Right cardiac atrium (tissue), 5 donors: ENCODE measurements at regions of chr14 and their contacts with region 1.

Region 1: GRCh38 chr14:99982537-99983250 is 82.5 kb upstream of the EVL start:
- DNase-seq: peak in 2 of 3 donors; percentile 45 to 53
- ATAC-seq: peak; percentile 88 to 89
- H3K4me3 ChIP-seq: no peak overlapping the region
- H3K27ac ChIP-seq: no peak overlapping the region
- H3K4me1 ChIP-seq: no peaks in the 10 kb centered on the region
- H3K27me3 ChIP-seq: no peaks in the 10 kb centered on the region

Region 2: GRCh38 chr14:100025111-100025510 is 42.4 kb after region 1 on chr14:
- intact Hi-C with region 1: no loop called
- DNase-seq: no peak
- ATAC-seq: peak in 1 of 2 donors; percentile 33
- H3K4me3 ChIP-seq: no peak overlapping the region
- H3K27ac ChIP-seq: no peak overlapping the region
- H3K4me1 ChIP-seq: peaks cover 4% of the 10 kb centered on the region
- H3K27me3 ChIP-seq: no peaks in the 10 kb centered on the region

Region 3: DNA sequence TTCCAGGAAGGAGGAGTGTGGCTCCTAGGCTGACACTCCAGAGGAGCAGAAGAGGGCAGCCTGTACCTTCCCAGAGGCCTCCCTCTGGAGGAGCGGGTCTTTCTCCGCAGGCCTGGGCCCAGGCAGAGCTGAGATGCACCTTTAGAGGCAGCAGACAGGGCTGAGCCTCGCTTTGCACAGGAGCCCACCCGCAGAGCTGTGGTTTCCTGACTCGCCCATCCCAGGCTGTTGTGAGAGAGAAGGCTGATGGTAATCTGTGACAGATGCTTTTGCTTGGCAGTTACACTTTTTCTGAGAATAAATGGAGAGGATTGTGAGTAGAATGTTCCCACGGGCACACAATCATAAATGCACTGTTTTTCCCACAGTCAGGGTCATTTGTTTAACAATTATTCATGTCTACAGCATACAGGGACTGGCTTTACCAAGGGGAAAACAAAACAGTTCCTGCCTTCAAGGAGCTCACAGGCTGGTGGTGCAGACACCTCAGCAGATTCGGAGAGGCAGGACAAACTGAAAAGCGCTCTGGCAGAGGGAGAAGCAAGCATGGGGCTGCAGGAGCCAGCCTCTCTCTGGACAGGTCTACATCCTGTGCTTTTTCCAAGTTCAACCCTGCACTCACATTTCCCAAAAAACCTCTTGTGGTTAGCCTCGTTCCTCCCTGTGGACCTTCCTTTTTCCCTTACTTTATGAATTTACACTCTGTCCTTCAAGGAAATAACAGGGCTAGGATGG is 96.5 kb after region 1 on chr14:
- intact Hi-C with region 1: no loop called
- DNase-seq: peak in 2 of 3 donors; percentile 65 to 67
- ATAC-seq: peak; percentile 47 to 59
- H3K4me3 ChIP-seq: no peak overlapping the region
- H3K27ac ChIP-seq: no peak overlapping the region
- H3K4me1 ChIP-seq: peaks cover 18% of the 10 kb centered on the region
- H3K27me3 ChIP-seq: no peaks in the 10 kb centered on the region

Region 4: GRCh38 chr14:100122481-100123222 is 140.0 kb after region 1 on chr14:
- intact Hi-C with region 1: no loop called
- DNase-seq: no peak
- ATAC-seq: no peak
- H3K4me3 ChIP-seq: no peak overlapping the region
- H3K27ac ChIP-seq: no peak overlapping the region
- H3K4me1 ChIP-seq: no peaks in the 10 kb centered on the region
- H3K27me3 ChIP-seq: no peaks in the 10 kb centered on the region

Region 5: DNA sequence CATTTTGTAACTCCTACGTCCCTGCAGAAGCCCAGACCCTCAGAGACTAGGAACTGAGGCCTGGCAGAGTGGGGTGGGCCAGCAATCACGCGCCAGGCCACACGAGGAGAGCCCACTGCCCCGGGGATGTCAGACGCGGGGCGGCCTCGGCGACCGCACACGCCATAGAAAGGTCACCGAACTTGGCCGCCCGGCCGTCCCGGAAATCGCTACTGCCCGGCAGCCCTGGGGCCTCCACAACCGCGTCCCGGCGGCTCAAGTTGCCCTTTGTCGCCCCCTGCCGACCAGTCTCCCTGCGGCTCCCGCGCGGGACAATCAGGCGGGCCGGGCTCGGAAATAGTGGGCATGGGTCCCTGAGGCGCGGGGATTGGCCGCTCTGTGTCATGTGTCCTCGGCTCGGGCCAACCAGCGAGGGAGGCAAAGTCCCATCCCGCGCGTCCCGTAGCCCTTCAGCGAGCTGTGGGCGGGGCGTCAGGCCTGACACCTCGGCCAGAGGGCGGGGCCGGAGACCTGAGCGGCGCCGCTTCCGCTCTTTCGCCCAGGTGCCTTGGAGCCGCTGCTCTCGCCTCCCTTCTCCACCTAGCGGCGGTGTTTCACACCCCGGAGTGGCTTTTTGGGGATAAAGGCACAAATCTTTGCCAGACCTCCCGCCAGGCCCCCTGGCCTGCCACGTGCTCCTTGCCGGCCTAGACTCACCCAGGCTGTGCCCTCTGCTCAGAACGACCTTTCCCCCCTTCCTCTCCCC is 210.2 kb after region 1 on chr14:
- intact Hi-C with region 1: loop called in 3 of 4 experiments (anchors 2 to 10 kb)
- DNase-seq: peak; percentile 99 to 100 (median 100)
- ATAC-seq: peak; percentile 99
- H3K4me3 ChIP-seq: peak overlapping the region; percentile 24
- H3K27ac ChIP-seq: peak overlapping the region; percentile 89
- H3K4me1 ChIP-seq: peaks cover 2% of the 10 kb centered on the region
- H3K27me3 ChIP-seq: no peaks in the 10 kb centered on the region